Activated naive CD4-positive, alpha-beta T cell treated with anti-CD3 and anti-CD28 coated beads for 36 hours (primary cell): ENCODE measurements at regions of chr14 and their contacts with region 1.

Region 1: DNA sequence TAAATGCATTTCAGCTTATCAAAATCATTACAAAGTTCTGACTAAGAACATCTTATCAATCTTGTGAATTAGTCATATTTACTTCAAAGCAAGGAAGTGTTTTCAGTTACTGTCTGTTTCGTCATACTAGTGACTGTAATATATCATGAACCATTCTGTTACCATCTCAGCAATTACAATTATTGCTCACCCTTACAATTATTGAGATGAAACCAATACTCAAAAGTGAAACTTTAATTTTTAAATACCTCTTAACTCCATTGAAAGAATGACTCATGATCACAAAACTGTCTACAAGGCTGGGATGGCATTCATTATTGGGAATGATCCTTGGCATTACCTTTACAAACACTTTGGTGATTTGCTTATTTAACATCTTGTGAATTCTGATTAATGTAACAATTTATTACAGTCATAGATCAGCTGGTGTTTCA is 90.3 kb downstream of the RPS6KA5 start:
- DNase-seq: no peak
- H3K4me3 Mint-ChIP-seq: peak overlapping the region; percentile 47
- H3K27ac Mint-ChIP-seq: peak overlapping the region; percentile 88
- H3K4me1 Mint-ChIP-seq: peaks cover 41% of the 10 kb centered on the region
- H3K27me3 Mint-ChIP-seq: no peaks in the 10 kb centered on the region

Region 2: DNA sequence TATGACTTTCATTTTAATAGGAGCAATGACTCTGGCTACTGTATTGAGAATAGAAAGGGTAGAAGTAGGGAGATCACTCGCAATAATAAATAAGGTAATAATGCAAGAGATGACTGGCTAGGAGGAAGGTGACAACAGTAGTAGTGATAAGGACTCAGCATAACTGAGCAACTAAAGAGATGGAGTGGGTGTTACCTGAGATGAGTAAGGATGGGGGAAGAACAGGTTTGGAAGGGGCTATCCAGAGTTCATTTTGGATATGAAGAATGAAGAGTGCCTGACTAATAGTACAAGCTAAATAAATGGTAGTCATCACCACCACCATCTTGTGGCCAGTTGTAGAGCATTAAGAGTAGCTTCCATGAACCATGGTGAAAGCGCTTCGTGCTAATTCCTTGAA is 10.8 kb before region 1 on chr14:
- CTCF ChIA-PET with region 1: interaction called, 5 read pairs
- intact Hi-C with region 1: loop called (anchors 1 kb)
- DNase-seq: no peak
- H3K4me3 Mint-ChIP-seq: no peak overlapping the region
- H3K27ac Mint-ChIP-seq: no peak overlapping the region
- H3K4me1 Mint-ChIP-seq: peaks cover 9% of the 10 kb centered on the region
- H3K27me3 Mint-ChIP-seq: no peaks in the 10 kb centered on the region

Region 3: DNA sequence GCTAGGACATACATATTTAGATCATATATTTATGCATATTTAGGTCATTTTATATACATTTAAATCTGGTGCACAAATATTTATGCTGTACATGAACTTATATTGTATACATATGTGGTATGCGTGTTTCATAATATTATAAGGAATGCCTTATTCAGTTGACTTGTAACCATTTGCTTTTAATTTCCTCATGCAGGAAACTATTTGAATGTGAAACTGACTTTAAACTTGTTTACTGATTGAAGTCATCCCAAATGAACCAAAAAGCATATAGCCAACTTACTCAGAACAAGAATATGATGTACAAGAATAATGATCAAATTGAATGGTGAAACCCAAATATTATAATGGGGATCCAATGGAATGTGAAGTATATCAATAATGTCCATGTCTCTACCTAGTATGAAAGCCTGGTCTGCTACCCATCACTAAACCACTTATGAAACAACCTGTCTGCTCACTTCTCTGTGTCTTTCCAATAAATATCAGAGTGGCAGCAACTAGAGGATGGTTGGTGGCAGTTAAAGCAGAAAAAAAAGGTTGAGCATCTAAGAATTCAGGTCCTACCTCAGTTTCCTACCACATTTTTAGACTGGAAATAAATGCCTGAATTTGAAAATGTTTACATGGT is 51.9 kb after region 1 on chr14:
- CTCF ChIA-PET with region 1: interaction called, 3 read pairs
- intact Hi-C with region 1: loop called (anchors 1 kb)
- DNase-seq: no peak
- H3K4me3 Mint-ChIP-seq: peak overlapping the region; percentile 48
- H3K27ac Mint-ChIP-seq: peak overlapping the region; percentile 80
- H3K4me1 Mint-ChIP-seq: peaks cover 43% of the 10 kb centered on the region
- H3K27me3 Mint-ChIP-seq: no peaks in the 10 kb centered on the region

Region 4: DNA sequence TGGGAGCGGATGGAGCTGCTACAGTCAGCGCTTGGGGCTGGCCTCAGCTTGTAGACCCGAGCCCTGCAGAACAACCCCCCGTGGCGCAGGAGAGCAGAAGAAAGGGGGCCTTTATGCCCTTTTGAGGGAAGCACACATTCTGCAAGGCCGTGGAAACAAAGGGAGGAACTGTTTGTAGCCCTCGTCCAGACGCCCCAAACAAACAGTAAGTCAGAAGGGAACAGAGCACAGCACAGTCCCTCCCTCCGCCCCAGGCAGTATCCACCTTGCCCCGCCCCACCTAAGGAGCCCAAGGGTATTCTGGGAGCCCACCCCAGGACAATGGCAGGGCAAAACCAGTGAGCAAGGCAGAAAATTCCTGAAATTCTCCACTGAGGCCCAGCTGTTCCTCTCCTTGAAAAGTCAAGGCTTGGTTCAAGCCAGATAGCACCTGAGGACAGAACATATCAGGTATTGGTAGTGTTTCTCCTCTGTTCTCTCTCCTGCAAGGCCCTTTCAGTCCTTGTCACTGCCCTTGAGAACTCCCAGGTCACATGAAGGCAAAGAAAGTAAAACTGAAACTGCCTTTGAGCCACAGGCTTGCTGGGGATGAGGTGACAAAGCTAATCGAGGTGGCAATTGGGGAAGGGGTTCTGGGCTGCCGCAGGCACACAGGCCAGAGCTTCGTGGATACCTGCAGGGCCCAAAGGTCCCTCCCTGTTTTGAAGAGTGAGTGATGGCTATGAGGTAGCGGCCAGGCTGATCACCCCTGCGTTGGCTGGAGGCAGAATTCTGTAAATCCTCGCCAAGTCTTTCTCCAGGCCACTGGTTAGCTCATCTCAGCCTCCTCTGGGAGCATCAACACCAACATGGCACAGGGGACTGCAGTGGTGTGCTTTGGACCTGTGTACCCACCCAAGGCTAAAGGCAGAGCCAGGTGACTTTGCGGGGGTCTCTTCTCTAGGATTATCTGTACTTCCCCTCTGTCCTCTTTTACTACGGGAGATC is 144.2 kb after region 1 on chr14:
- CTCF ChIA-PET with region 1: interaction called, 5 read pairs
- intact Hi-C with region 1: loop called (anchors 1 kb)
- DNase-seq: peak; percentile 82
- H3K4me3 Mint-ChIP-seq: peak overlapping the region; percentile 94
- H3K27ac Mint-ChIP-seq: peak overlapping the region; percentile 95
- H3K4me1 Mint-ChIP-seq: peaks cover 60% of the 10 kb centered on the region
- H3K27me3 Mint-ChIP-seq: no peaks in the 10 kb centered on the region

Region 5: DNA sequence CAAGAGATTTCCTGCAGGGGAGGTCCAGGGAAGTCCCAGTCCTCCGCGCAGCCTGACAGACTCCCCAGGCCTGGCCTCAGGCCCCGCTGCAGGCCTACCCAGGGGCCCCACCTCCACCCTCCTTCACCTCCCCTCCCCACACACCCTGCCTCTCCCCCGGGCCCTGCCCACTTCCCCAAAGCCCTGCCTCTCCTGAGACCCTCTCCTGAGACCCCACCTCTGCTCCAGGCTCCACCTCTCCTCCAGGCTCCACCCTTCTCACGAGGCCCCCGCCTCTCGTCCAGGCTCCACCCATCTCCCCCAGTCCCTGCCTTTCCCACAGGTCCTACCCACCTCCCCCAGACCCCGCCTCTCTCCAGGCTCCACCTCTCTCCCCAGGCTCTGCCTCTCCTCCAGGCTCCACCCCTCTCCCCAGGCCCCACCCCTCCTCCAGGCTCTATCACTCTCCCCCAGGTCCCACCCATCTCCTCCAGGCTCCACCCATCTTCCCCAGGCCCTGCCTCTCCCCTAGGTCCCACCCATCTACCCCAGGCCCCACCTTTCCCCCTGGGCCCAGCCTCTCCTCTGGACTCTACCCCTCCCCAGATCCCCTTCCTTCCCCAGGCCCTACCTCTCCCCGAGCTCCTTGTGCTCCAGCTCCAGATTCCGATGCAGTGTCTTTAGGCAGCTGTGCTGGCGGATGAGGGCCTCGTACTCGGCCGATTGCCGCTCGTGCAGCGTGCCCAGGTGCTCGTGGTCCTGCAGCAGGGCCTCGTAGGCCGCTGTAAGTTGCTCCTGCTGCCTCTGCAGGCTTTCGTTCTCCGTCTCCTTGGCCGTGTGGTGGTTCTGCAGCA is 333.1 kb after region 1 on chr14:
- CTCF ChIA-PET with region 1: no interaction called
- intact Hi-C with region 1: loop called (anchors 1 kb)
- DNase-seq: peak; percentile 89
- H3K4me3 Mint-ChIP-seq: no peak overlapping the region
- H3K27ac Mint-ChIP-seq: peak overlapping the region; percentile 93
- H3K4me1 Mint-ChIP-seq: peaks cover 58% of the 10 kb centered on the region
- H3K27me3 Mint-ChIP-seq: no peaks in the 10 kb centered on the region

Region 6: DNA sequence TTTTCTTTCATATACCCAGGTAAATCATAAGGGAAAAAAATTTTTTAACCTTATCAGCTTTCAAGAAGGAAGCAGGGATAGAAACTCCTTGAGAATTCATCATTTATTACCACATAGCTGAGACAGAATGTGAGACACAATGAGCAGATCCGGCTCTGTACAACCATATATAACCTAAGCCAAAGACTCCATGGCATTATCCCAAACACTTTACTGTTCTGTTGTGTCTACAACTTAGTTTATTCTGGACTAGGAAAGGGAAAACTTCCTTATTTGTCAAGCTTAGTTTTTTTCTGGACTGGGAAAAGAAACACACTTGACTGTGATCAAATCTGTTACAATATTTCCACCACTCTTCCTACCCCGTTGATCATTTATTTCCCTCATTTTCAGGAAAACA is 800.0 kb after region 1 on chr14:
- CTCF ChIA-PET with region 1: no interaction called
- intact Hi-C with region 1: no loop called
- DNase-seq: no peak
- H3K4me3 Mint-ChIP-seq: no peak overlapping the region
- H3K27ac Mint-ChIP-seq: no peak overlapping the region
- H3K4me1 Mint-ChIP-seq: peaks cover 21% of the 10 kb centered on the region
- H3K27me3 Mint-ChIP-seq: no peaks in the 10 kb centered on the region